ENCODE measurements at regions of chr10 and their contacts with region 1.

Region 1: GRCh38 chr10:100185364-100186252 is at the start of gene ERLIN1:
- DNase-seq: peak; percentile 90
- H3K4me3 Mint-ChIP-seq: peak within 1 kb of the TSS; percentile 98
- H3K27ac Mint-ChIP-seq: peak within 1 kb of the TSS; percentile 96
- H3K4me1 Mint-ChIP-seq: peaks cover 59% of the 10 kb centered on the region
- H3K27me3 Mint-ChIP-seq: no peaks in the 10 kb centered on the region
- total RNA-seq, gene ERLIN1: 16.6 and 19.4 TPM in 2 replicates

Region 2: GRCh38 chr10:99620713-99621453 is 564.7 kb before region 1 on chr10:
- intact Hi-C with region 1: loop called (anchors 10 kb)
- DNase-seq: peak; percentile 91
- H3K4me3 Mint-ChIP-seq: peak overlapping the region; percentile 80
- H3K27ac Mint-ChIP-seq: peak overlapping the region; percentile 97
- H3K4me1 Mint-ChIP-seq: peaks cover 39% of the 10 kb centered on the region
- H3K27me3 Mint-ChIP-seq: no peaks in the 10 kb centered on the region

Region 3: DNA sequence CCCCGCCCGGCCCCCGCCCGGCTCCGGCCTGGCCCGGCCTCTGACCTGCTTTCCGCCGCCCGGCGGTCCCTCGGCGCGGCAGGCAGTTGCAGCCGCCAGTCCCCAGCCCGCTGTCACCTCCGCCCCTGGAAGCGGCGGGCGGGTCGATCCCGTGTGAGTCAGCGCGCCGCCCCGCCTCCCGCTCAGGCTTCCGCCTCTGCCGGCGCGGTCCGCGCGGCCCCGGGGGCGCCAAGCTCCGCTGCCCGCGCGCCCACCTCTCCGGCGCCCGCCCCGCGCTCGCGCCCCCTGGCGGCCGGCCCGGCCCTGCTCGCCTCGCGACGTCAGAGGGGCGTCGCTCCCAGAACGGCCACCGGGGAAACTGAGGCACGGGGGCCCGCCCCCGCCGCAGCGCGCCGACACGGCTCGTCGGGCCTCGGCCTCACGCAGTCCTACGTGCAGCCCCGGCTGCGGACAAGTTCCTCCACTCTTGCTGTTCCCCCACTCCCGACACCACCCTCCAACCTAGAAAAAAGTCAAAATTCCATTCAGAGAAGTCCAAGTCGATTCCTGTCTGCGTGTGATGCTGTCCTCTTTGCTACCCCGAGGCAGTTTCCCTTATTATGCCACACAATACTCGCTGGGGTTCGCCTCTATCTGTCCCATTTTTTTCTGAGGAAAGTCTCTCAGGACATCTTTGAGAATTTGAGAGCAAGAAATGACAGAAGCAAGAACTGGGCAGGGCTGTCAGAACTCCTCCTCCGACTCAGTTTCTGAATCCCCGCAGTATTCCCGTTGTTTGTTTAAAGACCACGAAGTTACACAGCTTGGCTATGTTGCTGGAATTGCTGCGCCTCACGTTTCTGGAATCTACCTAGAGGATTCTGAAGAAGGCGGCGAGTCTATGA is 175.6 kb before region 1 on chr10 and contains the start of gene DNMBP:
- intact Hi-C with region 1: loop called (anchors 10 kb)
- DNase-seq: peak; percentile 77
- H3K4me3 Mint-ChIP-seq: peak within 1 kb of the TSS; percentile 91
- H3K27ac Mint-ChIP-seq: peak within 1 kb of the TSS; percentile 83
- H3K4me1 Mint-ChIP-seq: peaks cover 45% of the 10 kb centered on the region
- H3K27me3 Mint-ChIP-seq: peaks cover 23% of the 10 kb centered on the region
- total RNA-seq, gene DNMBP: 1.4 and 1.5 TPM in 2 replicates

Region 4: GRCh38 chr10:100174699-100175677 is 10.6 kb before region 1 on chr10:
- intact Hi-C with region 1: loop called (anchors 1 kb)
- DNase-seq: no peak
- H3K4me3 Mint-ChIP-seq: peak overlapping the region; percentile 20
- H3K27ac Mint-ChIP-seq: peak overlapping the region; percentile 41
- H3K4me1 Mint-ChIP-seq: peaks cover 42% of the 10 kb centered on the region
- H3K27me3 Mint-ChIP-seq: no peaks in the 10 kb centered on the region

Region 5: DNA sequence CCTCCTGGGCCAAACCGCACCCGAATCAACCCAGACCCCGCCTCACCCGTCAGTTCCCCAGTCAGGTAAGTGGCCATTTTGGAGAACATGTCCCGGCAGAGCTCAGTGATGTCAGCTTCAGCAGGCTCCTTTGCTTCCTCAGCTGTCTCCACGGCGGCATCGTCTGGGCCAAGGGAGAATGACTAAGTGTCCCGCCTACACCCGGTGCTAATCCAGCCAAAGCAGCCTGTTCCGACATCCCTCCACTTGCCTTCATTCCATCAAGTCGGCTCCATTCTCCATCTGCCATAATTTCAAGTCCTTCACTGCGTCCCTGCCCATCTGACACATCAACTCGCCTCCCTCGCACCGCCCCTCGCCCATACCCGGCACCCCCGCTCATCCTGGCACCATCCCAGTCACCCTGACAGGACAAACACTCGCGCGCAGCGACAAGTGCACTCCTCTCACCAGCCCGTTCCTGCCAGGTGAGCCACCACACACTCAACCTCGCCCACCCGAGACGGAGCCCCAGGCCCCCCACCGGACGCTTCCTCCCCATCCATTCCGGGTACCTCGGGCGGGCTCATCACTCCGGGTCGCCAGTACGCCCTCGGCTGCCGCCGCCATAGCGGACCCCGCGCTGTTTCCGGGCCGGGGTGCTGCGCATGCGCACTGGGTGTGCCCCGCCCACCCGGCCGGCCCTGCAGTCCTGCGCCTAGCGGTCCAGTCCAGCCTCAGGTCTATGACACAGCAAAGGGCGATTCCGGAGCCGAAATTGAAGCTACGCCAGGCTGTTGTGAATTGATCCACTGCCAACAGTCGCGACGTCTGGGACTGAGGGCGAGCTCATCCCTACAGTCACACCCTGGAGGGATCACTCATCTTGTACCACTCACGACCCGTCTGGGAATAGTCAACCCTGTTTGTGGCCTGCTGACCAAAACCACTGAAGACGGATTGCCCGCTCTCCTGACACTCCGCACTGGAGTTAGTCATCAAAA is 100.7 kb after region 1 on chr10 and contains the start of gene BLOC1S2:
- intact Hi-C with region 1: loop called (anchors 1 kb)
- DNase-seq: peak; percentile 91
- H3K4me3 Mint-ChIP-seq: peak within 1 kb of the TSS; percentile 99
- H3K27ac Mint-ChIP-seq: peak within 1 kb of the TSS; percentile 99
- H3K4me1 Mint-ChIP-seq: peaks cover 28% of the 10 kb centered on the region
- H3K27me3 Mint-ChIP-seq: peaks cover 3% of the 10 kb centered on the region
- total RNA-seq, gene BLOC1S2: 65.7 and 66.5 TPM in 2 replicates

Region 6: GRCh38 chr10:100346765-100347567 is 161.4 kb after region 1 on chr10 and contains the start of gene SCD:
- intact Hi-C with region 1: no loop called
- DNase-seq: peak; percentile 88
- H3K4me3 Mint-ChIP-seq: peak within 1 kb of the TSS; percentile 100
- H3K27ac Mint-ChIP-seq: peak within 1 kb of the TSS; percentile 99
- H3K4me1 Mint-ChIP-seq: peaks cover 72% of the 10 kb centered on the region
- H3K27me3 Mint-ChIP-seq: no peaks in the 10 kb centered on the region
- total RNA-seq, gene SCD: 194 TPM in 2 replicates

Region 7: GRCh38 chr10:100529475-100530298 is 344.1 kb after region 1 on chr10 and contains the start of gene NDUFB8:
- intact Hi-C with region 1: loop called (anchors 5 kb)
- DNase-seq: peak; percentile 86
- H3K4me3 Mint-ChIP-seq: peak within 1 kb of the TSS; percentile 92
- H3K27ac Mint-ChIP-seq: peak within 1 kb of the TSS; percentile 97
- H3K4me1 Mint-ChIP-seq: peaks cover 54% of the 10 kb centered on the region
- H3K27me3 Mint-ChIP-seq: no peaks in the 10 kb centered on the region
- total RNA-seq, gene NDUFB8: 292 and 304 TPM in 2 replicates

Measured in activated T-helper 1 cell treated with anti-CD3 and anti-CD28 coated beads, Interleukin-12 subunit alpha, Interleukin-12 subunit beta, Interleukin-2, Interleukin-4 antibody, amounts not matched to agents 30 ng/mL and 10 ng/mL and 1 ng/mL, durations not matched to agents 14 hours and 24 hours and 36 hours (primary cell).